ENCODE measurements at regions of chrX and their contacts with region 1.

Region 1: GRCh38 chrX:152817078-152817764 is 13.3 kb downstream of the CETN2 start:
- DNase-seq: peak; percentile 44
- H3K4me3 Mint-ChIP-seq: no peak overlapping the region
- H3K27ac Mint-ChIP-seq: no peak overlapping the region
- H3K4me1 Mint-ChIP-seq: no peaks in the 10 kb centered on the region
- H3K27me3 Mint-ChIP-seq: peaks cover 3% of the 10 kb centered on the region

Region 2: DNA sequence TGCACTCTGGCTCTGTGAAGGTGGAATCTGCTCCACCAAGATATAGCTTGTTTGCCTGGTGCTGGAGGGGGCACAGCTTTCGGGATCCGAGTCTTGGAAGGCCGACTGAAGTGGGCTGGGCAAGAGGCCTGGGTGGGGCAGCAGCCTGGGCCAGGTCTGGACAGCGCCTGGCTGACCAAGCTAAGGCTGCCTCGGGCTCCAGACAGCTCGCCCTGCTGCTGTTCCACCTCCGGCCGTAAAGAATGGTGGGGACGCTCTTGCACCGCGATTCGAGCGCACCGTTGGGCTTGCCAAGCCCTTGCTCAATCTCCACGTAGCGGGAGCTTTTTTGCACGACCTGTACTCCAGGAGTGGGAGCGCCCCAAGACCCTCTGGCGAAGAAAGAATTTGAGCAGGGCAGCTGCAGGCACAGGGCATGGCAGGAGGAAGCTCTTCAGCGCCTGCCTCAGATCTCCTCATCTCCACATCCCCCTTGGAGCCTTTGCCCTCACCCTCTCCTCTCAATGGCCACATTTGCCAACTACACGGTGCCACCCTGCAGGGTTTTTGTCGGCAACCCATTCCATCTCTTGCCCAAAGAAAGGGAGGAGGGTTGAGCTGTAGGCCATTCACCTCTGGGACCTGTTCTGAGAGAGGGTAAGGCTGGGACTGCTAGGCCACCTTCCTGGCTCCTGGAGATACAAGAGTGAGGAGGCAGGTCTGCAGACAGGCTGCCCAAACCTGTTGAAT is 1063.7 kb before region 1 on chrX:
- CTCF ChIA-PET with region 1: no interaction called
- intact Hi-C with region 1: loop called (anchors 5 kb)
- DNase-seq: peak; percentile 19
- H3K4me3 Mint-ChIP-seq: no peak overlapping the region
- H3K27ac Mint-ChIP-seq: no peak overlapping the region
- H3K4me1 Mint-ChIP-seq: no peaks in the 10 kb centered on the region
- H3K27me3 Mint-ChIP-seq: peaks cover 10% of the 10 kb centered on the region

Region 3: GRCh38 chrX:152637649-152638442 is 179.4 kb before region 1 on chrX and contains the start of gene GABRQ:
- CTCF ChIA-PET with region 1: interaction called, 3 read pairs
- intact Hi-C with region 1: loop called (anchors 1 kb)
- DNase-seq: peak; percentile 7
- H3K4me3 Mint-ChIP-seq: no peak within 1 kb of the TSS
- H3K27ac Mint-ChIP-seq: no peak within 1 kb of the TSS
- H3K4me1 Mint-ChIP-seq: peaks cover 5% of the 10 kb centered on the region
- H3K27me3 Mint-ChIP-seq: peaks cover 28% of the 10 kb centered on the region
- total RNA-seq, gene GABRQ: 0.05 TPM in 1 of 2 experiments, not detected in the other

Region 4: GRCh38 chrX:152733261-152733975 is 83.8 kb before region 1 on chrX and contains the starts of genes CSAG1 and MAGEA12:
- CTCF ChIA-PET with region 1: no interaction called
- intact Hi-C with region 1: no loop called
- DNase-seq: no peak
- H3K4me3 Mint-ChIP-seq: no peak within 1 kb of the TSS
- H3K27ac Mint-ChIP-seq: no peak within 1 kb of the TSS
- H3K4me1 Mint-ChIP-seq: no peaks in the 10 kb centered on the region
- H3K27me3 Mint-ChIP-seq: no peaks in the 10 kb centered on the region
- total RNA-seq, gene CSAG1: not detected
- total RNA-seq, gene MAGEA12: not detected